CD14-positive monocyte (primary cell): ENCODE measurements at regions of chr4 and their contacts with region 1.

Region 1: DNA sequence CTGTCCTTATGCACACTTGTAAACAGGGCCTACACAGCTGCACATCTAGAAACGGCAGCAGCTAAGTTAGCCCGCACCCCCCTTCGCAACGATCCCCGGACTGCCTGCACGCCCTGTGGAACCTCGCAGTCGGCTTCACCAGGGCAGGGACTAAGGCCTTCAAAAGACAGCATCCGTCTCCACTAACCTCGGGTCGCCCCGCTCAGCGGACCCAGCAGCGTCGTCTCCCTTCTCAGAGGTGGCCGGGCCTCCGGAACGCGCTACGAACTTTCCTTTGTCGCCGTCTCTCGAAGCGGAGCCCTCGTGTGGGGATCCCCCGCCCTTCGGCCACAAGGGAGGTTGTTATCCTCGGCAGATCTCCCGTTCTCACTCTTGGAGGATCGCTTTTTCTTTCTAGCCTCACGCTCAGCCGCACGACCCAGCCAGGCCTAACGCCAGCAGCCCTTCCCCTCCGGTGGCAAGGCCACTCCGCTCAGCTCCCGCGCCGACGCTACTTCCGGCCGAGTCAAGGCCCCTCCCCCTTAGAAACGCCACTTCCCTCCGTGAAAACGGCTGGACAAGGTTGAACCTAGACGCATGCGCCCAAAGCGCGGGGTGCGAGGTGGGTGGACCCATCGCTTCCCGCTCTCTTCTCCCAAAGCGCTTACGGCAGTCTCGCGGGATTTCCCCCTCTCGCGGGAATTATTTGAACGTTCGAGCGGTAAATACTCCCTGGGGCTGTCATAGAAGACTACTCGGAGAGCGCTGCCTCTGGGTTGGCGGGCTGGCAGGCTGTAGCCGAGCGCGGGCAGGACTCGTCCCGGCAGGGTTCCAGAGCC is at the starts of genes DCAF16 and NCAPG:
- DNase-seq: peak; percentile 99 to 100 (median 100)
- H3K4me3 ChIP-seq: peak within 1 kb of the TSS; percentile 77 to 83 (median 83)
- H3K4me3 Mint-ChIP-seq: peak within 1 kb of the TSS; percentile 98 to 99
- H3K27ac ChIP-seq: peak within 1 kb of the TSS; percentile 95 to 97
- H3K27ac Mint-ChIP-seq: peak within 1 kb of the TSS; percentile 95 to 99 (median 99)
- H3K4me1 ChIP-seq: peaks cover 33 to 68% of the 10 kb centered on the region in 2 donors
- H3K4me1 Mint-ChIP-seq: peaks cover 54% of the 10 kb centered on the region
- H3K27me3 ChIP-seq: no peaks in the 10 kb centered on the region
- H3K27me3 Mint-ChIP-seq: no peaks in the 10 kb centered on the region
- CTCF ChIP-seq: no peak
- polyA plus RNA-seq, gene DCAF16: 4.1 to 14.5 (median 4.6) TPM
- polyA plus RNA-seq, gene NCAPG: not detected

Region 2: DNA sequence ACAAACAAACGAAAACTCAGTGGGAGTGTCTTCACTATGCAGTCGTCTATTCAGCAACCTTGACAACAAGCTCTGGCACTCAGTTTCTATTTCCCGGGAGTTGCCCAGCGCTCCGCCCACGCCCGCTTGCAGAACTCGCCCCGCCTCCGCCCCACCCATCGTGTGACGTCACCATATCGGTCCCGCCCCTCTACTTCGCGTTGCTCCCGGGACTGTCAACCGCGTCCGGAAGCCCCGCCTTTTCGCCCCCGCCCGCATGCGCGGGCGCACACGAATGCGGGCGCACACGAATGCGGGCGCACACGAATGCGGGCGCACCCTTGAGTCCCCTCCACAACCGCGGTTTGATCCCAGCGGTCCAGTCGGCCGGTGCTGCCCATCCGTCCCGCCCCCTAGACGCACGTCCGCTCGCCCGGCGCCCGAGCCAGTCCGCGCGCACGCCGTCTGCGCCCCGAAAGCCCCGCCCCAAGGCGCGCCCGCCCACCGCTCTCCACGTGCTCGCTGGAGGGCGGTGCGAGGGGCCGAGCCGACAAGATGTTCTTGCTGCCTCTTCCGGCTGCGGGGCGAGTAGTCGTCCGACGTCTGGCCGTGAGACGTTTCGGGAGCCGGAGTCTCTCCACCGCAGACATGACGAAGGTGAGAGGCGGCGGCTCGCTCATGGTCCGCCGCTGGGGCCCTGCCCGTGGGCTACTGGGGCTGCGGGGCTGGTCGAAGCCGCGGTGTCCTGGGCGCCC is 233.4 kb before region 1 on chr4 and contains the start of gene LAP3:
- intact Hi-C with region 1: loop called (anchors 5 to 10 kb)
- DNase-seq: peak; percentile 92 to 97 (median 96)
- H3K4me3 ChIP-seq: peak within 1 kb of the TSS; percentile 80 to 91 (median 88)
- H3K4me3 Mint-ChIP-seq: peak within 1 kb of the TSS; percentile 89 to 94
- H3K27ac ChIP-seq: peak within 1 kb of the TSS; percentile 85 to 91
- H3K27ac Mint-ChIP-seq: peak within 1 kb of the TSS; percentile 88 to 98 (median 97)
- H3K4me1 ChIP-seq: peaks cover 39 to 43% of the 10 kb centered on the region in 2 donors
- H3K4me1 Mint-ChIP-seq: peaks cover 41% of the 10 kb centered on the region
- H3K27me3 ChIP-seq: no peaks in the 10 kb centered on the region
- H3K27me3 Mint-ChIP-seq: peaks cover 0 to 3% (median 1%) of the 10 kb centered on the region in 3 donors
- CTCF ChIP-seq: no peak
- polyA plus RNA-seq, gene LAP3: 98.3 to 127 (median 108) TPM

Region 3: GRCh38 chr4:17614416-17615299 is 195.8 kb before region 1 on chr4 and contains the start of gene MED28:
- intact Hi-C with region 1: loop called in 1 of 2 experiments (anchors 10 kb)
- DNase-seq: peak; percentile 94 to 97 (median 95)
- H3K4me3 ChIP-seq: peak within 1 kb of the TSS; percentile 90 to 100 (median 98)
- H3K4me3 Mint-ChIP-seq: peak within 1 kb of the TSS; percentile 98 to 99
- H3K27ac ChIP-seq: peak within 1 kb of the TSS; percentile 75 to 98
- H3K27ac Mint-ChIP-seq: peak within 1 kb of the TSS; percentile 94 to 99 (median 97)
- H3K4me1 ChIP-seq: peaks cover 27 to 35% of the 10 kb centered on the region in 2 donors
- H3K4me1 Mint-ChIP-seq: peaks cover 33% of the 10 kb centered on the region
- H3K27me3 ChIP-seq: no peaks in the 10 kb centered on the region
- H3K27me3 Mint-ChIP-seq: peaks cover 0 to 2% (median 0%) of the 10 kb centered on the region in 3 donors
- CTCF ChIP-seq: no peak
- polyA plus RNA-seq, gene MED28: 8.6 to 46.4 (median 43.5) TPM

Region 4: DNA sequence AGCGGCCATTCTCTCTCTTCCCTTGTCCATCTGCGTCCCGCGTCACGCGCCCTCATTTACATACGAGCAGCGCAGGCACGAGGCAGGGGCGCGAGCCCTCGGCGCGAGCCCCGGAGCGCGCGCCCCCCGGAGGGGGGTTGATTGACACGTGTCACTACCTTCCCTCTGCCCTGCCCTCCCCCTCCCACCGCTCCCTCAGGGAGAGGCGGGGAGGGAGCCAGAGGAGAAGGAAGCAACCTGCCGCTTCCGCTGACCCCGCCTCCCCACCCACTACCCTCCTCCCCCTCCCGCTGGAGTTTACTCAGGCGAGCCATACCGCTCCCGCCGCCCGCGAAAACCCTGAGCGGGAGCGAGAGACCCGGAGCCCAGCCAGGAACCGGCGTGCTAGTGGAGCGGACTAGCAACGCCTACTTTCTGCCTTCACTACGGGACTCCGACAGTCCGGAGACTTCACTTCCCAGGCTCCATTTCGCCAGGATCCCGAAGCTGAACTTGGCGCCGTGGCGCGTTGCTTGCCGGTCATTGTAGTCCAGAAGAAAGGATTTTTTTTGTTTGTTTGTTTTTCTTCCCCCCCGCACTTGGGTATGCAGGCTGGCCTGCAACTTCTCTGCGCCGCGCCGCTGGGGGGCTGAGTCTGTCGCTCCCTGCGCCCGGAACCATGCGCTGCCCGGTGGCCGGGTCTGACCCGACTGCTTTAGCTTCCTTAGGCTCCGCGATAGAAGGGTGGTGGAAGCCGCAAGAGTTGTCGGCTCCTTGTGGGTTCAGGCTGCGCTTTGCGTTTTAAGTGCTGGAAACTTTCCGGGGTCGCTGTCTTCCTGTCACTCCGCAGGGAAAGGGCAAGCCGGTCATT is 211.5 kb after region 1 on chr4 and contains the start of gene LCORL:
- intact Hi-C with region 1: loop called (anchors 5 kb)
- DNase-seq: peak; percentile 89 to 91 (median 90)
- H3K4me3 ChIP-seq: peak within 1 kb of the TSS; percentile 66 to 97 (median 69)
- H3K4me3 Mint-ChIP-seq: peak within 1 kb of the TSS; percentile 99 to 100
- H3K27ac ChIP-seq: peak within 1 kb of the TSS; percentile 91 to 92
- H3K27ac Mint-ChIP-seq: peak within 1 kb of the TSS; percentile 88 to 97 (median 93)
- H3K4me1 ChIP-seq: peaks cover 28 to 39% of the 10 kb centered on the region in 2 donors
- H3K4me1 Mint-ChIP-seq: peaks cover 39% of the 10 kb centered on the region
- H3K27me3 ChIP-seq: peaks cover 13 to 15% of the 10 kb centered on the region in 2 donors
- H3K27me3 Mint-ChIP-seq: peaks cover 4 to 19% (median 17%) of the 10 kb centered on the region in 3 donors
- CTCF ChIP-seq: no peak
- polyA plus RNA-seq, gene LCORL: 3.1 to 19.1 (median 9.6) TPM